Dendritic cell treated with granulocyte-macrophage colony-stimulating factor and Interleukin-4, amounts not matched to agents 40 ng/mL and 50 ng/mL, for 4 days (primary cell): ENCODE measurements at regions of chr6 and their contacts with region 1.

Region 1: DNA sequence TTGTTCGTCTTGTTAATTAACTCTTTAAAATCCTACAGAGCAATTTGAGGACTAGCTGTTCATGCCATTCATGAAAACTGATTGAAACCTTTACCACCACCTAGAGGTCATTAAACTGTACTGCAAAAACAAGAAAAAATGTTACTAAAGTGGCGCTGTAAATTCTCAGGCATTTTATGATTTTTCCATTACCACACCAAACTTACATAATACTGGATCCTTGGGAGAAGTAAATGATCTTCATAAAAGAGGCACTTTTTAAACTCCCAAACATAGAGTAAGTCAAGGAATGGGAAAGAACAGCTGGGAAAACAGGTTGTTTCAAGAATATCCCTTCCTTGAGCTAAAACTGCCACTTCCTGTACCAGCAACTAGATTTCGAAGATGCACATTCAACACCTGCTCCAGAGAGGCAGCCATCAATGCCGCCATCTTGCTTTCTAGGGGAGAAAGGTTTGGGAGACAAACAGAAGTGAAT is 54.3 kb downstream of the MYLIP start:
- H3K4me3 Mint-ChIP-seq: no peak overlapping the region
- H3K27ac Mint-ChIP-seq: no peak overlapping the region
- H3K4me1 Mint-ChIP-seq: peaks cover 9% of the 10 kb centered on the region
- H3K27me3 Mint-ChIP-seq: peaks cover 5% of the 10 kb centered on the region

Region 2: DNA sequence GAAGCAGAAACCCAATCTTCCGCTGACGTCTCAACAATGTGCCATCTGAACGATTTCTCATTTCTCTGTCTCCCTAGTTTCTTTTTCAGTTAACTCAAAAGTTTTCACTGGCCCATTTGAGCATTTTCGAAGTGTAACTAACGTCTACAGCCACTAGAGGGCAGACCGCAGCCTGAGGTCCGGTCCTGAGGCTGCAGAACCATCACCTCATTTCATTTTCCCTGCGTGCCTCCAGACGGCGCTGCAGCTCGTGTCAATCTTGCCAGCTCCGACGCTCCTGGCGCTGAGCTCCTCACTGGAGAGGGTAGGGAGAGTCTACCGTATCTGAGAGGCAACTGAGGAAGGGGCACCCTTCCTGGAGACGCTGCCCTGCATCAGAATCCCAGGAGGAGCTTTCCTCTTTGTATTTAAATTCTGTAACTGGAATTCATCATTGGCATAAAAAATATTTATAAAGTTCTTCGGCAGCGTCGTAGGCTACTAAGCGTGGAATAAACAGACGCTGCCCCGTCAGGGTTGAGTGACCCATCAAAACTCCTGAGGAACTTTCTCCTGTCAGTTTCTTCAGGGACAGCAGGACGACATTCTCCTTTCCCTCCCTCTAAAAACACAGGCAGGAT is 491.9 kb before region 1 on chr6:
- intact Hi-C with region 1: loop called (anchors 1 kb)
- H3K4me3 Mint-ChIP-seq: no peak overlapping the region
- H3K27ac Mint-ChIP-seq: peak overlapping the region; percentile 18
- H3K4me1 Mint-ChIP-seq: peaks cover 23% of the 10 kb centered on the region
- H3K27me3 Mint-ChIP-seq: peaks cover 1% of the 10 kb centered on the region

Region 3: DNA sequence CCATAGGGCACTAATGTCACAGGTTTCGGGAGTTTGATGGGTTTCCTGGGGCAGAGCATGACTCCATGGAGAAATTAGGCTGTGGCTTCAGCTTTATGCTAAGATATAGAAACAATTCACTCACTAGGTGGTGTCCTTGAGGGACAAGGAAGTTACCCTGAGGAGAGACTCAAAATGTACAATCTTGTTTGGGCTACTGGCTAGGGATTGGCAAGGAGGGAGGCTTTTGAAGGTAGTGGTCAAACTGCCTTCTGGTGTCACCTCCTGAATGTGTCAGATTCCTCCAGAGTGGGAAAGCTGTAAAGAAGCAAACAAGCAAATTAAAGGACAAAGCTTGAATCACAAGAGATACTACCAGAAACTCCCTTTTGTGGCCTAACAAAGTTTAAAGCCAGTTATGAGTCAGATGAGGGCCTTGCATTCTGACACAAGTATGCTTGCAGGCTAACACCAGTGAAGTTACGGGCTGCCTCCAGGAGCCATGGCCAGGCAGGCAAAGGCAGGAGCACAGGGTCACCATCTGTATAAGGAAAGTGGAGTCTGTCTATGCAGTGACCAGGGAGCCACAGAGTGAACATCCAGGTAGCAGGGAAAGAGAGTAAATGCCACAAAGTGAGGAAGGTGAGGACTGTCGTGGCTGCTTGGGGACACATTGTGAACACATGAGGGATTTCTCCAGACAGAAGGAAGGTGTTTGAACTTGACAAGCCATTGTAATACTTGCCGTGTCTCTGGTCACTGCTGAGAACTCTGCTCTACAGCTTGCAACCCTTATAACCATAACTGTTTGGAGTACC is 412.7 kb before region 1 on chr6:
- intact Hi-C with region 1: loop called (anchors 10 kb)
- H3K4me3 Mint-ChIP-seq: no peak overlapping the region
- H3K27ac Mint-ChIP-seq: peak overlapping the region; percentile 51
- H3K4me1 Mint-ChIP-seq: peaks cover 19% of the 10 kb centered on the region
- H3K27me3 Mint-ChIP-seq: no peaks in the 10 kb centered on the region